MCF 10A (cell line): ENCODE measurements at regions of chr2 and their contacts with region 1.

Region 1: DNA sequence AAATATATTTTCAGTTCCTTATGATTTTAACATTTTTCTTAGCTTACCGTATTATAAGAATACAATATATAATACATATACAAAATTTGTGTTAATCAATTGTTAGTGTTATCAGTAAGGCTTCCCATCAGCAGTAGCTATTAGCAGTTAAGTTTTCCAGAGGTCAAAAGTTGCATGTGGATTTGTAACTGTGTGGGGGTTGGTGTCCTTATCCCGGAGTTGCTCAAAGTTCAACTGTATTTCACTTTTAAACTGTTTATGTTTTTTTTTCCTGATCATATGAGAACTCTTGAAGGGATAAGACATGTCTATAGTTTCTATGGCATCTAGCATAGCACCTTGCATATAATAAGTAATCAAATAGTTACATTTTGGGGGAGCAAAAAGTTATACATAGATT is 11.9 kb upstream of the MFSD6 start:
- DNase-seq: no peak
- H3K4me3 Mint-ChIP-seq: no peak overlapping the region
- H3K27ac Mint-ChIP-seq: no peak overlapping the region
- H3K4me1 Mint-ChIP-seq: no peaks in the 10 kb centered on the region
- H3K27me3 Mint-ChIP-seq: peaks cover 54% of the 10 kb centered on the region
- CTCF ChIP-seq: no peak

Region 2: GRCh38 chr2:190420801-190421200 is 24.5 kb after region 1 on chr2:
- CTCF ChIA-PET with region 1: no interaction called
- POLR2A ChIA-PET with region 1: no interaction called
- intact Hi-C with region 1: no loop called
- DNase-seq: no peak
- H3K4me3 Mint-ChIP-seq: no peak overlapping the region
- H3K27ac Mint-ChIP-seq: no peak overlapping the region
- H3K4me1 Mint-ChIP-seq: peaks cover 2% of the 10 kb centered on the region
- H3K27me3 Mint-ChIP-seq: no peaks in the 10 kb centered on the region
- CTCF ChIP-seq: no peak

Region 3: GRCh38 chr2:190486037-190486623 is 89.9 kb after region 1 on chr2:
- CTCF ChIA-PET with region 1: no interaction called
- POLR2A ChIA-PET with region 1: no interaction called
- intact Hi-C with region 1: loop called (anchors 10 kb)
- DNase-seq: peak; percentile 27
- H3K4me3 Mint-ChIP-seq: no peak overlapping the region
- H3K27ac Mint-ChIP-seq: peak overlapping the region; percentile 69
- H3K4me1 Mint-ChIP-seq: peaks cover 5% of the 10 kb centered on the region
- H3K27me3 Mint-ChIP-seq: no peaks in the 10 kb centered on the region
- CTCF ChIP-seq: no peak

Region 4: DNA sequence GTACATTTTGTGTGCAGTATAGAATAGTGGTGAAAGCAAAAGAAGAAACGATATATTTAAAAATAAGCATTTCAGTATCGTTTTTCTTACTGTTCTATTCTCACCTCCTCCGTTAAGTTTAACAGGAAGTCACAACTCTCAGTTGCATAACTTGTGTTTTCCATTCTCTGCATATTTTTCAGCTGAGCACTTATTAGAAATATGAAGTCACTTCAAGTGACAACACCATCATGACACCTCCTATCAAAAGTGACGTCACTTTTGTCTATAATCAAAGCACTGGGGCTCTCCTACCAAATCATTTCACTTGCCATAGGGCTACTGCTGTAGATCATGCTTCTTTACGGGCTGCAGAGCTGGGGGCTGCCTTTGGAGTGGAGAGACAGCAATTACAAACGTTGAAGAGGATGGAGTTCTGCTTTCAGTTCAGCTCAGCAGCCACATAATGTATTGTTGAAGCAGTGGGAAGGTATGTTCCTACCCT is 718.2 kb after region 1 on chr2:
- CTCF ChIA-PET with region 1: no interaction called
- POLR2A ChIA-PET with region 1: no interaction called
- intact Hi-C with region 1: no loop called
- DNase-seq: no peak
- H3K4me3 Mint-ChIP-seq: no peak overlapping the region
- H3K27ac Mint-ChIP-seq: no peak overlapping the region
- H3K4me1 Mint-ChIP-seq: no peaks in the 10 kb centered on the region
- H3K27me3 Mint-ChIP-seq: no peaks in the 10 kb centered on the region
- CTCF ChIP-seq: no peak